ENCODE measurements at regions of chr1 and their contacts with region 1.

Region 1: DNA sequence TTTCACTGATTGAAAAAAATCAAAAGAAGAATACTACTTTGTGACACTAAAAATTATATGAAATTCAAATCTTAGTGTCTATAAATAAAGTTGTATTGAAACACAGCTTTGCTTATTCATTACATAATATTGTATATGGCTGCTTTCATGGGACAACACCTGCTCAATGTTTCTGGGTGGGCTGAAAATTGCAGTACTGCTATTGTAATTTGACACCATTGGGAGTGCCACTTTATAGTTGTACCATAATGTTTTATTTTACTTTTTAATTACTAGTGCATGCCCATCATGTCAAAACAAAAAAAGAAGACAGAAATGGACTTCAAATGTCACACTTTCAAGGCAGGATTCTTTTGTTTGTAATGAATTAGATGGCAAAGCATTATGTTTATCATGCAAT is 16.5 kb upstream of the RPTN start:
- DNase-seq: no peak
- H3K4me3 ChIP-seq: no peak overlapping the region
- H3K27ac ChIP-seq: no peak overlapping the region
- H3K4me1 ChIP-seq: no peaks in the 10 kb centered on the region
- H3K27me3 ChIP-seq: no peaks in the 10 kb centered on the region
- CTCF ChIP-seq: no peak
- EP300 ChIP-seq: no peak
- RAD21 ChIP-seq: no peak

Region 2: DNA sequence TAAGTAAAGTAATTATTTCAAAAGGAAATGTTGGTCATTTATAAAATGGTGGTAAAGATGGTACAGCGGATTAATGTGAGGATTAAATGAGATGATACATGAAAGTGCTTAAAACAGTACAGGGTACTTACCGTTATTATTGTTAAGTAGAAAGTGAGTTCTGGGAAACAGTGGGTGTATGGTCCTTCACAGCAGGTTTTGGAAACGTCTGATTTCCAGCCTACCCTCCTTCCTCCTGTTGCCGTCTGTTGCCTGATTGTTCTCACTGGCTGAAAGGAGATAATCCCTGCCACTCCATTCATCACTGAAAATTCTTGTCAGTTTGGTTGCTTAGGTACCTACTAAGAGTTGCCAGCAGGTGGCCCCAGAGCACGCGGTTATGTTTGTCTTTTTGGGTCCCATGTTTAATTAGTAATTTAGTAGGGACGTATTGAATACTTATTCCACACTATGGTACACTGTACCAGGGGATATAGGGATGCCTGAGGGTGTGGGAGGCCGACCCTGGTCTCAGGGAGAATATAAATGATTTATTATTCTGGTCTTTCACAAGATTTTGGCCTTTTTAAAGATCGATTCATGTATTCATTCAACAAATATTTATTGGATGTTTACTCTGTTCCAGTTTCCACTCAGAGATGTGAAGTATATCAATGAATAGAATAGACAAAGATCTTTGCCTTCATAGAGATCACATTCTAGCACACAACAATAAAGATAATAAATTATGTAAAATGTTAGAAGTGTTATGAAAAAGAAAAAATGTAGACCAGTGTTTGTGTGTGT is 14.3 kb after region 1 on chr1:
- CTCF ChIA-PET with region 1: interaction called, 47 read pairs
- POLR2A ChIA-PET with region 1: no interaction called
- DNase-seq: peak; percentile 52
- H3K4me3 ChIP-seq: peak overlapping the region; percentile 8 to 45; a peak in 2 of 4 replicates
- H3K27ac ChIP-seq: no peak overlapping the region
- H3K4me1 ChIP-seq: no peaks in the 10 kb centered on the region; a peak in 1 of 4 replicates
- H3K27me3 ChIP-seq: 0 out of 2 replicates have a peak, but pooled peaks cover 5% of the 10 kb centered on the region
- CTCF ChIP-seq: peak; percentile 80
- EP300 ChIP-seq: no peak
- RAD21 ChIP-seq: peak; percentile 60

Measured in SK-N-SH (cell line).